Activated CD4-positive, alpha-beta T cell treated with anti-CD3 and anti-CD28 coated beads, Interleukin-2, amount 10 ng/mL, durations not matched to agents 7 days and 5 days (primary cell): ENCODE measurements at regions of chr11 and their contacts with region 1.

Region 1: DNA sequence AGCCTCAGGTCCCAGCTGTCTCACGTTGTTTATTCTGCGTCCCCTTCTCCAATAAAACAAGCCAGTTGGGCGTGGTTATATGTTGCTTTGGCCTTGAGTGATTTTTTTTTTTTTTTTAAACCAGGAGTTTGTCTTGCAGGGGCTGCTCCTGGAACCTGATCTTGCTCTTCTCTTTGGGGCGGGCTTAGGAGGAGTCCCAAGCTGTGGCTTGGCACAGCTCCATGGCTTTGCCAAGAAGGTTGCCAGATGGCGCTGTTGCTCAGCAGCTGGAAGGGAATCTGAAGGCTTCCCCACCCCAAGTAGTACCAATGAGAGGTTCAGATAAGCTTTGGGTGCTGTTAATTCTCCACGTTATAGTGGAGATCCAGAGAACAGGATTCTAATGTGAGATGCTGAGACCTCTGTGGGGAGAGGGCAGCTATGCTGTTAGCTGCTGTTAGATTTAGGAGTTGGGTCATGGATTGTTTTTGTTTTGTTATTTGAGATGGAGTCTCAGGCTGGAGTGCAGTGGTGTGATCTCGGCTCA is 2.0 kb upstream of the FERMT3 start:
- DNase-seq: peak; percentile 86
- H3K4me3 Mint-ChIP-seq: peak overlapping the region; percentile 33
- H3K27ac Mint-ChIP-seq: peak overlapping the region; percentile 77
- H3K4me1 Mint-ChIP-seq: peaks cover 51% of the 10 kb centered on the region
- H3K27me3 Mint-ChIP-seq: no peaks in the 10 kb centered on the region

Region 2: GRCh38 chr11:64185816-64186498 is 18.6 kb before region 1 on chr11 and contains the start of gene STIP1:
- CTCF ChIA-PET with region 1: interaction called, 141 read pairs
- POLR2A ChIA-PET with region 1: interaction called, 4 read pairs
- DNase-seq: peak; percentile 99
- H3K4me3 Mint-ChIP-seq: peak within 1 kb of the TSS; percentile 94
- H3K27ac Mint-ChIP-seq: peak within 1 kb of the TSS; percentile 98
- H3K4me1 Mint-ChIP-seq: peaks cover 45% of the 10 kb centered on the region
- H3K27me3 Mint-ChIP-seq: no peaks in the 10 kb centered on the region
- total RNA-seq, gene STIP1: 211 to 213 TPM

Region 3: GRCh38 chr11:64225612-64226506 is 21.3 kb after region 1 on chr11 and contains the starts of genes NUDT22 and TRPT1:
- CTCF ChIA-PET with region 1: interaction called, 94 read pairs
- POLR2A ChIA-PET with region 1: interaction called, 3 read pairs
- DNase-seq: peak; percentile 94
- H3K4me3 Mint-ChIP-seq: peak within 1 kb of the TSS; percentile 86
- H3K27ac Mint-ChIP-seq: peak within 1 kb of the TSS; percentile 90
- H3K4me1 Mint-ChIP-seq: peaks cover 38% of the 10 kb centered on the region
- H3K27me3 Mint-ChIP-seq: no peaks in the 10 kb centered on the region
- total RNA-seq, gene NUDT22: 70.2 to 82.1 TPM
- total RNA-seq, gene TRPT1: 20.0 to 26.5 TPM

Region 4: GRCh38 chr11:64269380-64270234 is 65.1 kb after region 1 on chr11:
- CTCF ChIA-PET with region 1: interaction called, 15 read pairs
- POLR2A ChIA-PET with region 1: no interaction called
- DNase-seq: peak; percentile 97
- H3K4me3 Mint-ChIP-seq: peak overlapping the region; percentile 88
- H3K27ac Mint-ChIP-seq: peak overlapping the region; percentile 92
- H3K4me1 Mint-ChIP-seq: peaks cover 26% of the 10 kb centered on the region
- H3K27me3 Mint-ChIP-seq: no peaks in the 10 kb centered on the region

Region 5: GRCh38 chr11:64341851-64342791 is 137.6 kb after region 1 on chr11:
- CTCF ChIA-PET with region 1: interaction called, 10 read pairs
- POLR2A ChIA-PET with region 1: no interaction called
- DNase-seq: peak; percentile 93
- H3K4me3 Mint-ChIP-seq: peak overlapping the region; percentile 84
- H3K27ac Mint-ChIP-seq: no peak overlapping the region
- H3K4me1 Mint-ChIP-seq: peaks cover 53% of the 10 kb centered on the region
- H3K27me3 Mint-ChIP-seq: no peaks in the 10 kb centered on the region